Naive thymus-derived CD4-positive, alpha-beta T cell (primary cell): ENCODE measurements at regions of chr1 and their contacts with region 1.

Region 1: GRCh38 chr1:180631766-180632325 is at the start of gene XPR1:
- DNase-seq: peak; percentile 80 to 99 (median 96)
- ATAC-seq: peak; percentile 99
- H3K4me3 ChIP-seq: peak within 1 kb of the TSS; percentile 85
- H3K4me3 Mint-ChIP-seq: no peak within 1 kb of the TSS
- H3K27ac ChIP-seq: peak within 1 kb of the TSS; percentile 94
- H3K27ac Mint-ChIP-seq: peak within 1 kb of the TSS in 5 of 9 donors; percentile 91 to 95 (median 93)
- H3K4me1 ChIP-seq: peaks cover 12 to 16% of the 10 kb centered on the region in 2 donors
- H3K4me1 Mint-ChIP-seq: peaks cover 0 to 19% (median 13%) of the 10 kb centered on the region in 7 donors
- H3K27me3 ChIP-seq: no peaks in the 10 kb centered on the region
- H3K27me3 Mint-ChIP-seq: peaks cover 0 to 10% (median 5%) of the 10 kb centered on the region in 5 donors
- total RNA-seq, gene XPR1: 12.9 to 19.7 (median 15.4) TPM

Region 2: GRCh38 chr1:179365320-179366092 is 1266.3 kb before region 1 on chr1 and contains the start of gene AXDND1:
- CTCF ChIA-PET with region 1: no interaction called
- POLR2A ChIA-PET with region 1: no interaction called
- intact Hi-C with region 1: loop called in 1 of 2 experiments (anchors 2 kb)
- DNase-seq: peak; percentile 80 to 96 (median 94)
- ATAC-seq: peak; percentile 95
- H3K4me3 ChIP-seq: peak within 1 kb of the TSS; percentile 91
- H3K4me3 Mint-ChIP-seq: peak within 1 kb of the TSS; percentile 82 to 99 (median 94)
- H3K27ac ChIP-seq: peak within 1 kb of the TSS; percentile 91
- H3K27ac Mint-ChIP-seq: peak within 1 kb of the TSS; percentile 99 to 100 (median 100)
- H3K4me1 ChIP-seq: peaks cover 5 to 8% of the 10 kb centered on the region in 2 donors
- H3K4me1 Mint-ChIP-seq: peaks cover 4 to 21% (median 14%) of the 10 kb centered on the region in 7 donors
- H3K27me3 ChIP-seq: no peaks in the 10 kb centered on the region
- H3K27me3 Mint-ChIP-seq: peaks cover 0 to 10% (median 0%) of the 10 kb centered on the region in 5 donors
- total RNA-seq, gene AXDND1: 0.98 to 2.3 (median 1.3) TPM in 3 of 5 experiments, not detected in the others

Region 3: GRCh38 chr1:180229152-180229973 is 402.5 kb before region 1 on chr1:
- CTCF ChIA-PET with region 1: no interaction called
- POLR2A ChIA-PET with region 1: no interaction called
- intact Hi-C with region 1: loop called in 1 of 2 experiments (anchors 10 kb)
- DNase-seq: peak in 1 of 9 donors; percentile 36
- ATAC-seq: peak; percentile 51
- H3K4me3 ChIP-seq: peak overlapping the region; percentile 27
- H3K4me3 Mint-ChIP-seq: peak overlapping the region; percentile 50 to 81 (median 70)
- H3K27ac ChIP-seq: no peak overlapping the region
- H3K27ac Mint-ChIP-seq: no peak overlapping the region
- H3K4me1 ChIP-seq: peaks cover 15 to 17% of the 10 kb centered on the region in 2 donors
- H3K4me1 Mint-ChIP-seq: peaks cover 14 to 35% (median 21%) of the 10 kb centered on the region in 7 donors
- H3K27me3 ChIP-seq: peaks cover 15 to 36% of the 10 kb centered on the region in 2 donors
- H3K27me3 Mint-ChIP-seq: peaks cover 62 to 85% (median 70%) of the 10 kb centered on the region in 5 donors

Region 4: DNA sequence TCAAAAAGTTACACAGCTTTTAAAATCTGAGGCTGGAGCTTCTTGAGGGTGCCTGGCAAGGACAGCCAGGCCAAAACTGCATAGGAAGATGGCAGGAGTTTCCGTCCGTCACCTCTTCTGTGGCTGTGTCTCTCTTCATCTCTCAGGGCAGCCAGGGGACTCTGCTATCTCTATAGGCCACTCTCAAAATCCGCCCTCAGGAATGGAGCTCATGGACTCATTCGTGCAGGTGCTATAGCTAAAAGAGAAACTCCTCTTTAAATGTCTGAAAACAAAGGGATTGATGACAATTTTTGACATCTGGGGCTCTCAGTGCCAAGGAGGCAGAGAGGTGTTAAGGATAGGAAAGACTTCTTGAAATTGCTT is 45.9 kb before region 1 on chr1:
- CTCF ChIA-PET with region 1: no interaction called
- POLR2A ChIA-PET with region 1: no interaction called
- intact Hi-C with region 1: loop called in 1 of 2 experiments (anchors 2 kb)
- DNase-seq: no peak
- ATAC-seq: no peak
- H3K4me3 ChIP-seq: no peak overlapping the region
- H3K4me3 Mint-ChIP-seq: peak overlapping the region in 1 of 10 donors; percentile 81
- H3K27ac ChIP-seq: no peak overlapping the region
- H3K27ac Mint-ChIP-seq: peak overlapping the region in 1 of 9 donors; percentile 93
- H3K4me1 ChIP-seq: no peaks in the 10 kb centered on the region
- H3K4me1 Mint-ChIP-seq: peaks cover 0 to 27% (median 0%) of the 10 kb centered on the region in 7 donors
- H3K27me3 ChIP-seq: no peaks in the 10 kb centered on the region
- H3K27me3 Mint-ChIP-seq: peaks cover 0 to 25% (median 5%) of the 10 kb centered on the region in 5 donors

Region 5: GRCh38 chr1:181021811-181022434 is 390.1 kb after region 1 on chr1:
- CTCF ChIA-PET with region 1: no interaction called
- POLR2A ChIA-PET with region 1: no interaction called
- intact Hi-C with region 1: loop called (anchors 1 kb)
- DNase-seq: peak; percentile 12 to 67 (median 33)
- ATAC-seq: peak; percentile 21
- H3K4me3 ChIP-seq: peak overlapping the region; percentile 84
- H3K4me3 Mint-ChIP-seq: peak overlapping the region; percentile 92 to 98 (median 94)
- H3K27ac ChIP-seq: peak overlapping the region; percentile 84
- H3K27ac Mint-ChIP-seq: peak overlapping the region; percentile 93 to 100 (median 97)
- H3K4me1 ChIP-seq: peaks cover 21 to 22% of the 10 kb centered on the region in 2 donors
- H3K4me1 Mint-ChIP-seq: peaks cover 17 to 59% (median 48%) of the 10 kb centered on the region in 7 donors
- H3K27me3 ChIP-seq: no peaks in the 10 kb centered on the region
- H3K27me3 Mint-ChIP-seq: peaks cover 0 to 25% (median 0%) of the 10 kb centered on the region in 5 donors

Region 6: DNA sequence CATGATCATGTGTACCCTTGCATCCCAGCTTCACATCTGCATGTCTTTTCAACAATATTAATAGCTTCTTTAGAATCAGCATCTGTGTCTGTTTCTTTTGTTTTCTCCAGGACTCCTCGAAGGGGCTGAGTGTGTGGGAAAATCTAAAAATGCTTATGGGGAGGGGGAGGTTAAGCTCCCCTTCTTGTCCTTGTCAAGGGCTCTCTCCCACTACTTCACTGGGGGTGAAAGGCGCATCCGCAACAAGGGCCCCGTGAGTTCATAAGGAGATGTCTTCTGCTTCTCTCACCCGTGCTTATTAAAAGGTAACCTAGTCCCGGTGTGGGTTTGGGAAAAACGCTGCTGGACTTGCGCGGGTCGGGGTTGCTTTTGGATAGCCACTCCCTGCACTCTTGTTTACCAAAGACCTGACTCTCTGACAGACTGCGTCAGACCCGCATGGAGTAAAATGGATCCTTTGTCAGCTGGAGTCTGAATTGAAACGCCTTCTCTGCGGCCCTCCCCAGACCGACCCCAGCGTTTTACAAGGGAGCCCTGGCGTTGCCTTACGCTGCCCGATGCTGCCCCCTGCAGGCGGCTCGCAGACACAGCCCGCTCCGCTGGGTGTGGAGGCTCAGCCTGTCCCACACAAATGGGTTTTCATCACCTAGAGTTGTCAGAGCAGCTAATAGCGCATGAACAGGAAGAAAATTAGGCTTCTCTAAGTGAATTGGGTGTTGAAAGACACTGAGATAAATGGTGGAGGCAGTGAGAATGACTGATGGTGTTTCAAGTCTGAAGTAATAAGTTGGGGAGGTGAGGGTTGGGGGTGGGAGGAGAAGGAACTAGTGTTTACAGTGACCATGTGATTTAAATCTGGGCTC is 510.5 kb after region 1 on chr1:
- CTCF ChIA-PET with region 1: no interaction called
- POLR2A ChIA-PET with region 1: no interaction called
- intact Hi-C with region 1: loop called in 1 of 2 experiments (anchors 10 kb)
- DNase-seq: peak; percentile 70 to 91 (median 83)
- ATAC-seq: peak; percentile 96
- H3K4me3 ChIP-seq: no peak overlapping the region
- H3K4me3 Mint-ChIP-seq: peak overlapping the region in 4 of 10 donors; percentile 2 to 63 (median 18)
- H3K27ac ChIP-seq: no peak overlapping the region
- H3K27ac Mint-ChIP-seq: peak overlapping the region in 4 of 9 donors; percentile 28 to 81 (median 54)
- H3K4me1 ChIP-seq: peaks cover 7 to 15% of the 10 kb centered on the region in 2 donors
- H3K4me1 Mint-ChIP-seq: peaks cover 18 to 62% (median 34%) of the 10 kb centered on the region in 7 donors
- H3K27me3 ChIP-seq: no peaks in the 10 kb centered on the region
- H3K27me3 Mint-ChIP-seq: peaks cover 0 to 24% (median 0%) of the 10 kb centered on the region in 5 donors

Region 7: DNA sequence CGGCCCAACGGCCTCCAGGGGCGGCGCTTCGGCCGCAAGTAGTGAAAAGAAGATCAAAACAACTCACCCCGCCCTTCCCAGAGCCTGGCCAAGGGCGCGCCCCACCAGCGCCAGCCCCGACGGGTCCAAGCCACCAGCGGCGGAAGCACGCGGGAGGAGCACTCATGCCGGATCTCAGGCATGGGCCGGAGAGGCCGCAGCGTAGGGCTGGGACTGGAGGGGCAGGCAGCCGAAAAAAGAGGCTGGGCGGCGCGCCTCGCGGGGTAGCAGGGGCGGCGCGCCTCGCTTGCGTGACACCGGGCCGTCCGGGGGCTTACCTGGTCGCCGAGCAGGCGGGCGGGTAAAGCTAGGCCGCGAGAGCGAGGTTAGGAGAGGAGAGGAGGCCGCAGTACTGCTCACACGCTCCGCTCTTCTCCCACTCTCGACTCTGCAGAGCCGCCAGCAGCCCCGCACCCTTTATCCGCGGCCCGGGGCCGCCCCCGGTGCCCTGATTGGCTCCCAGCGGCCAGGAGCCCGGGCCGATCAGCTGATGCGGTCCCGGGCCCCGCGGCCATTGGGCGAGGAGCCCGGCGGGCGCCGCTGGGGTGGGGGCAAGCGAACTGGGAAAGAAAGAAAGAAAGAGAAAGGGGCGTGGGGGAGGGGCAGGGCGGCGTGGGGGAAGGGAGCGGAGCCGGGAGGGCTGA is 1759.7 kb after region 1 on chr1 and contains the start of gene GLUL:
- CTCF ChIA-PET with region 1: no interaction called
- POLR2A ChIA-PET with region 1: no interaction called
- intact Hi-C with region 1: loop called in 1 of 2 experiments (anchors 1 kb)
- DNase-seq: peak; percentile 46 to 83 (median 63)
- ATAC-seq: peak; percentile 87
- H3K4me3 ChIP-seq: peak within 1 kb of the TSS; percentile 73
- H3K4me3 Mint-ChIP-seq: peak within 1 kb of the TSS; percentile 87 to 98 (median 94)
- H3K27ac ChIP-seq: peak within 1 kb of the TSS; percentile 64
- H3K27ac Mint-ChIP-seq: peak within 1 kb of the TSS; percentile 82 to 97 (median 89)
- H3K4me1 ChIP-seq: peaks cover 10 to 14% of the 10 kb centered on the region in 2 donors
- H3K4me1 Mint-ChIP-seq: peaks cover 17 to 45% (median 29%) of the 10 kb centered on the region in 7 donors
- H3K27me3 ChIP-seq: no peaks in the 10 kb centered on the region
- H3K27me3 Mint-ChIP-seq: peaks cover 0 to 25% (median 0%) of the 10 kb centered on the region in 5 donors
- total RNA-seq, gene GLUL: 66.2 to 357 (median 112) TPM